Activated CD4-positive, alpha-beta T cell treated with anti-CD3 and anti-CD28 coated beads for 36 hours (primary cell): ENCODE measurements at regions of chr16 and their contacts with region 1.

Region 1: DNA sequence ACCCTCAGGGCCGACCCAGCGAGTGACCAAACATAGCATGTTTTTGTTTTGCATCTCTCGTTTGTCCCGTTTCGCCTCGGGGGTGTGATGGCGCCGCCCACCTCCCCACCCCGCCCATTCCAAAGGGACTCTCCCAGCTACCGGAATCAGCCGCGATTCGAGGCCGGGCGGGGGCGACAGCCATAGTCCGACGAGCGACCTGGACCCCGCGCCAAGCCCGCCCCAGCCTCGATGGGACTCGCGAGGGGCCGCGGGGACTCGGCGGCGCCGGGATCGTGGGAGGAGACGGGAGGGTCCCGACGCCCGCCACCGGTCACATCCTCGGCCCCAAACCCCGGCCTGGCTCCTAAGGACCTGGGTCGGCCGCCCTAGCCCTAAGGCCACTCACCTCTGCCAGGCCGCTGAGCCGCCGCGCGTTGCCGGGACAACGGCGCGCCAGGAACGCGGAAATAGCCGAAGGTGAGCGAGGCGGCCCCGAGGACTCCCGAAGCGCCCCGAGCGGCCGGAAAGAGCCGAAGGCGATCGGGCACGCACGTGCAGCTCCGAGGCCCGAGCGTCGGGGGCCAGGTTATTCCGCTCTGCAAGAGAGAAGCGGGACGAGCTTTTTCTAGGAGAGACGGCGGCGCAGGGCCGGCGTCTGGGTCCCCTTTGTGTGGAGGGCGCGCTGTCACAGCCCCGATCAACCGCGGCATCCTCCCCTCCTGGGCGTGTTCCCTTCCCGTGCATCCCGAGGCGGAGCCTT is 1.4 kb downstream of the IFT140 start:
- DNase-seq: peak; percentile 95
- ATAC-seq: peak; percentile 67
- H3K4me3 Mint-ChIP-seq: peak overlapping the region; percentile 88
- H3K27ac Mint-ChIP-seq: peak overlapping the region; percentile 97
- H3K4me1 Mint-ChIP-seq: peaks cover 21% of the 10 kb centered on the region
- H3K27me3 Mint-ChIP-seq: peaks cover 2% of the 10 kb centered on the region

Region 2: DNA sequence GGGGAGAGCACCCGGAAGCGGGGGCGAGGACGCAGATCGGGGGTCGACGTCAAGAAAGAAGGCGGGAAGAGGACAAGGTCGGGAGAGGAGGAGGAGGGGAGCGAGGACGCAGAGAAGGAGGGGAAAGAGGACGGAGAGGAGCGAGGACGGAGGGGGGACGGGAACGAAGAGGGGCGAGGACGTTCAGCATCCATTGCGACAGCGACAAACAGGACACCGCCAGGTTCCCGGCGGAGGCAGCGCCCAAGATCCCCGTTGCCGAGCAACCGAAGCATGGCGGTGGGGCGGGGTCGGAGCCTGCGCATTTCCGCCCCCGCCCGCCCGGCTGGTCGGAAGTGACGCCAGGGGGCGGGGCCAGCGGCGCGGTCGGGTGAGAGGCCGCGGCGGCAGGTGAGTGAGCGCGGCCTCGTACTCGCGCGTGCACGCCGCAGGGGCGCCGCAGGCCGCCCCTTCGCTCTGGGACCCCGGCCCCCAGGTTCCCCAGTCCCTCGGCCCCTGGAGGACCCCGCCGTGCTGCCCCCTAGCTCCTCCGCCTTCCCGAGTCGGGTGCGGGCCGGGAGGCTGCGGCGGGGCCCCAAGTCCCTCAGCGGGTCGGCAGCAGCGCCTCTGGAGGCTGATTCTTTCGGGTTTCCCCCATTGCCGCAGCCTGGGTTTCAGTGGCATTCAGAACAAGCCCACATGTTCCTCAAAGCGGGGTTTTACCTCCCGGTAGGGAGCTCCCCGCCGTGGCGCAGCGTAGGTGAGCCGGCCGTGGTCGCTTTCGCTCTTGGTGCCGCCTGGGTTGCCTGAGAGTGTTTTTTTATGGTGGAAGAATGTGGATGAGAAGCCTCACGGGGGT is 1375.8 kb before region 1 on chr16 and contains the start of gene FAM234A:
- CTCF ChIA-PET with region 1: no interaction called
- POLR2A ChIA-PET with region 1: no interaction called
- intact Hi-C with region 1: loop called in 1 of 2 experiments (anchors 2 kb)
- DNase-seq: peak; percentile 98
- ATAC-seq: peak; percentile 91
- H3K4me3 Mint-ChIP-seq: peak within 1 kb of the TSS; percentile 90
- H3K27ac Mint-ChIP-seq: peak within 1 kb of the TSS; percentile 96
- H3K4me1 Mint-ChIP-seq: peaks cover 17% of the 10 kb centered on the region
- H3K27me3 Mint-ChIP-seq: no peaks in the 10 kb centered on the region
- total RNA-seq, gene FAM234A: 11.3 to 15.2 TPM

Region 3: GRCh38 chr16:1308977-1309885 is 301.2 kb before region 1 on chr16 and contains the start of gene UBE2I:
- CTCF ChIA-PET with region 1: no interaction called
- POLR2A ChIA-PET with region 1: no interaction called
- intact Hi-C with region 1: loop called in 1 of 2 experiments (anchors 1 kb)
- DNase-seq: peak; percentile 98
- ATAC-seq: peak; percentile 67
- H3K4me3 Mint-ChIP-seq: peak within 1 kb of the TSS; percentile 97
- H3K27ac Mint-ChIP-seq: peak within 1 kb of the TSS; percentile 99
- H3K4me1 Mint-ChIP-seq: peaks cover 47% of the 10 kb centered on the region
- H3K27me3 Mint-ChIP-seq: no peaks in the 10 kb centered on the region
- total RNA-seq, gene UBE2I: 251 to 358 TPM

Region 4: DNA sequence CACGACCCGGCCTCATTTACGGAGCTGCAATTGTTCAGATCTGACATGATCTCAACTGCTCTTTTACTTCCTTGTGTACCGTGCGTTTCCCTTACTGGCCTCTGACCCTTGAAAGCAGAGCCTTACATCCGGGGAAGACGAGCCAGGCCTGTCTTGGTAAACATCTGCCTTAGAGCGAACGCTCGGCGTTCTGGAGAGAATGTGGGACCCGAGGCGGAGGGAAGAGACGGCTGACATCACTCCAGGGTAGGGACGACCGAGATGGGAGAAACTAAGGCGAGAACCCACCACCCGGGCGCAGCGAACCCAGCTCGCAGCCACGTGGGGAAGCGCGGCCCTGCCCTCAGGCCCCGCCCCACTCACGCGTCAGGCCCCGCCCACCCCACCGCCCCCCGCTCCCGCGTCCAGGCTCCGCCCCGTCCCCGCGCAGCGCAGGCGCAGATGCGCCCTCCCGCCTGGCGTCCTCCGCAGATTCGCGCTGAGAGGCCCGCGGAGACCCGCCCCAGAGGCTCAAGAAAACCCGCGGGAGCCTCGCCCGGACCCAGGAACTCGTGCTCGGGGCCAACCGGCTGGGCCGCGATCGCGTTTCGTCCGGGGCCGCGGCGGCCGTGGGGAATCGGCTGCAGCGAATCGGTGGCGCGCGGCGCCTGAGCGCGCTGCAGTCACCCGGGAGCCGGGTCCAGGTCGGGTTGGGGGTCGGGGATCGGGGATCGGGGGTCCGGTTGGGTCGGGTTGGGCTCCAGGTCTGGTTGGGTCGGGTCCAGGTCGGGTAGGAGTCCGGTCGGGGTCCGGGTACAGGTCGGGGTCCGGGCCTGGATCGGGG is 117.3 kb before region 1 on chr16 and contains the start of gene TELO2:
- CTCF ChIA-PET with region 1: no interaction called
- POLR2A ChIA-PET with region 1: no interaction called
- intact Hi-C with region 1: loop called in 1 of 2 experiments (anchors 1 kb)
- DNase-seq: peak; percentile 94
- ATAC-seq: peak; percentile 89
- H3K4me3 Mint-ChIP-seq: peak within 1 kb of the TSS; percentile 92
- H3K27ac Mint-ChIP-seq: peak within 1 kb of the TSS; percentile 97
- H3K4me1 Mint-ChIP-seq: peaks cover 15% of the 10 kb centered on the region
- H3K27me3 Mint-ChIP-seq: no peaks in the 10 kb centered on the region
- total RNA-seq, gene TELO2: 48.1 to 60.0 TPM

Region 5: DNA sequence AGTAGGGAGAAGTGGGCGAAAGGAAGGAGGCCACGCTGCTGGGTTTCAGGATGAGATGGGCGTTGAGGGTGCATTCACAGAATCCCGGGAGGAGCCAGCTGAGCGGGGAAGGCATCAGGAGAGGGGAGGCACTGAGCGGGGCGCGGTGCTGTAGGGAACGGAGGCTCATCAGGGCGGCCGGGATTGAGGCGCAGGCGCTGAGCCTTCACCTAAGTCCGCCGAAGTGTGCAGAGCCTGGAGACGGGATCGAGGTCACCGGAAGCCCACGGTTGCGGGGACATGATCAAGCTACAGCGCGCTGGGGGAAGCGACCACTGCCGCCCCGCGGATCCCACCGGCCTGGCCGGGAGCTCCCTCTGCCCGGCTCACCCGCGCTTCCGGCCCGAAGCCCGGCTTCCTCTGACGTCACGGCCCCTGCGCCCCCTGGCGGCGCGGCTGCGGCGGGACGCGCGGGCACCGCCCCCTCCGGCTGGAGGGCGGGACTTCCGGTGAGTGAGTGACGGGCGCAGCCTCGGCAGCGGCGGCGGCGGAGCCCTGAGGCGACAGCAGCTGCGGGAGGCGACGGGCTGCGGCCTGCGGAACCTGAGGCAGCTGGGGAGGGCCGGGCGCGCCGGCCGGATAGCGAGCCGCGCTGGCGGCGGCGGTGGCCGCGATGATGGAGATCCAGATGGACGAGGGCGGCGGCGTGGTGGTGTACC is 95.4 kb after region 1 on chr16 and contains the start of gene MAPK8IP3:
- CTCF ChIA-PET with region 1: interaction called, 7 read pairs
- POLR2A ChIA-PET with region 1: no interaction called
- intact Hi-C with region 1: loop called (anchors 1 kb)
- DNase-seq: peak; percentile 96
- ATAC-seq: peak; percentile 80
- H3K4me3 Mint-ChIP-seq: peak within 1 kb of the TSS; percentile 92
- H3K27ac Mint-ChIP-seq: peak within 1 kb of the TSS; percentile 90
- H3K4me1 Mint-ChIP-seq: peaks cover 32% of the 10 kb centered on the region
- H3K27me3 Mint-ChIP-seq: no peaks in the 10 kb centered on the region
- total RNA-seq, gene MAPK8IP3: 56.7 to 57.6 TPM

Region 6: DNA sequence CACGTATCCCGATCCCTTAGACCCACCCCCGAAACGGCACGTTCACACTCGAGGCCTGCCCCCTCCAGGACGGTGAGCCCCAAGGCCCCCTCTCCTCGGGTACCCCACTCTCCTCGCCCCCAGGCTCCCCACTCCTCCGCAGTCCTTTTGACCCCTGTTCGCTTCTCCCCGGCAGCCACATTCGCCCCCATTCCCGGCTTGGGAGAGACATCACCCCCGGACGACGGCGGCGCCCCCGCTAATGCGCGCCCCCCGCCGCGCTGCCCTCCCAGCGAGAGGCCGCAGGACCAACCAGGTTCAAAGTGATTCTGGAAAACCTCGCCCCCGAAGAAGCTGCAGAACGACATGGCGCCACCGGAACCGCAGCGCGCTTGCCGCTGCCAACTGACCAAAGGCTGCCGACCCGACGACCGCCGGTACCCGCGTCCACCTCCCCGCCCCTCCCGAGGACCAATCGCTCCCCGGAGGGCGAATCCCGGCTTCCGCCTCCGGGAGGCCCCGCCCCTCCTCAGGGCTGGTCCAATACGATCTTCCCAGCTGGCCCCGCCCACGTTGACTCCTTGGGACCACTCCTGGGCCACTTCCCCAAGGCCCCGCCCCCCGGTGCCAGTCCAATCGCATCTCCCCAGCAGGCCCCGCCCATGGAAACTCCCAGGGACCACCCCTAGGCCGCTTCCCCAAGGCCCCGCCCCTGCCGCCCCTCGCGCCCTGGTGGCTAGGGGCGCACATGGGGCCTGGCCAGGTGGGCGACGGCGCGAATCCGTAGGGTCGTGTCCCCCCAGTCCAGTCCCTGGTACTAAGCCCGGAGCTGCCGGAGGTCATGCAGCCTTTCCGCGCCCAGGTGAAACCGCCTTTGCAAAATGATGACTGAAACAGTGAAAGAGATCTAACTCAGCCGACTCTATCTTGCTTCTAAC is 332.6 kb after region 1 on chr16 and contains the start of gene MSRB1:
- CTCF ChIA-PET with region 1: no interaction called
- POLR2A ChIA-PET with region 1: no interaction called
- intact Hi-C with region 1: loop called in 1 of 2 experiments (anchors 2 kb)
- DNase-seq: peak; percentile 100
- ATAC-seq: peak; percentile 97
- H3K4me3 Mint-ChIP-seq: peak within 1 kb of the TSS; percentile 80
- H3K27ac Mint-ChIP-seq: peak within 1 kb of the TSS; percentile 82
- H3K4me1 Mint-ChIP-seq: peaks cover 26% of the 10 kb centered on the region
- H3K27me3 Mint-ChIP-seq: no peaks in the 10 kb centered on the region
- total RNA-seq, gene MSRB1: 17.3 to 21.8 TPM

Region 7: GRCh38 chr16:2267913-2268666 is 657.6 kb after region 1 on chr16 and contains the start of gene RNPS1:
- CTCF ChIA-PET with region 1: no interaction called
- POLR2A ChIA-PET with region 1: no interaction called
- intact Hi-C with region 1: loop called in 1 of 2 experiments (anchors 5 kb)
- DNase-seq: peak; percentile 98
- ATAC-seq: peak; percentile 86
- H3K4me3 Mint-ChIP-seq: peak within 1 kb of the TSS; percentile 92
- H3K27ac Mint-ChIP-seq: peak within 1 kb of the TSS; percentile 96
- H3K4me1 Mint-ChIP-seq: peaks cover 34% of the 10 kb centered on the region
- H3K27me3 Mint-ChIP-seq: no peaks in the 10 kb centered on the region
- total RNA-seq, gene RNPS1: 327 to 445 TPM